MCF 10A (cell line): ENCODE measurements at regions of chr6 and their contacts with region 1.

Region 1: DNA sequence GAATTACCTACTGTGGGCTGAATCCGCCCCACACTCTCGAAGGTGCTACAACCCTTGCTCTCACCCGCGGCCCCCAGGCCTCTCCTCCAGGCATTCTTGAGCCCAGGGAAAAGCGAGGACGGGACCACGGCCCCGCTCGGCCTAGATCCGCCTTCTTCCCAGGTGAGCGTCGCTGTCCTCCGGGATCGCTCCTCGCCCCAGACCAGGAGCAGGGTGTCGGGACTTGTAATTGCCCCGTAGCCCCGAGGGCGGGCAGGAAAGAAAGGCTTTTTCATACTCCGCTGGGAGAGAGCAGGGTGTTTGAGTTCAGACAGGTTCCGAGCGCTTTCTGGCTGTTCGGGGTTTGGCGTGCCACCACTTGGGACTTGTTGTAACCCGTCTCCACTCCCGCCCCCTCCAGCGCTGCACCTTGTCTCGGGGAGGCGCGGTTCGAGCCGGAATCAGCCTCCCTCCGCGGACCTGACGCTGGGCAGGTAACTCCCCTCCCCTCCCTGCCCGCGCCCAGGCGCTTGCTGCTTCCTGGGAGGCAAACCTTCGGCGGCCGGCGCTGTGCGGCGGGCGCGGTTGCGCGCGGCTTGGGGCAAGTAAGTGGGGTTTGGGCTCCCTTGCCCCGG is at the start of gene FAM83B:
- DNase-seq: peak; percentile 94
- H3K4me3 Mint-ChIP-seq: peak within 1 kb of the TSS; percentile 88
- H3K27ac Mint-ChIP-seq: peak within 1 kb of the TSS; percentile 97
- H3K4me1 Mint-ChIP-seq: peaks cover 49% of the 10 kb centered on the region
- H3K27me3 Mint-ChIP-seq: no peaks in the 10 kb centered on the region
- CTCF ChIP-seq: no peak
- total RNA-seq, gene FAM83B: 22.3 and 25.4 TPM in 2 replicates

Region 2: DNA sequence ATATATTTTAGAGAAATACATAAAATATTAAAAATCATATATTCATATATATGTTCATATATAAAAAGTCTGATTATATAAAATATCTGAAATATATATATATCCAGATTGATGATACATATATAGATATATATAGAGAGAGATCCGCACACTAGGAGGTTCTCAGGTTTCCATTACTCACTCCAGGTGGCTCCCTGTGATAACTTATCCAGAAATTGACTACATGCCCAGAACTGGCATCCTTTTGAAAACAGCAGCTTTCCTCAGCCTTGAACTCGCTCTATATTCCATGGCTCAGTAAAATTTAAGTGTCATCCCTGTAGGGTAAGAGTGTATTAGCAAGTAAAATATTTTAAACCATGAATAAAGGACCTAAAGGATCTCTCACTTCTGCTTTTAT is 331.3 kb before region 1 on chr6:
- CTCF ChIA-PET with region 1: no interaction called
- POLR2A ChIA-PET with region 1: no interaction called
- intact Hi-C with region 1: loop called (anchors 10 kb)
- DNase-seq: peak; percentile 45
- H3K4me3 Mint-ChIP-seq: no peak overlapping the region
- H3K27ac Mint-ChIP-seq: no peak overlapping the region
- H3K4me1 Mint-ChIP-seq: peaks cover 9% of the 10 kb centered on the region
- H3K27me3 Mint-ChIP-seq: no peaks in the 10 kb centered on the region
- CTCF ChIP-seq: no peak

Region 3: DNA sequence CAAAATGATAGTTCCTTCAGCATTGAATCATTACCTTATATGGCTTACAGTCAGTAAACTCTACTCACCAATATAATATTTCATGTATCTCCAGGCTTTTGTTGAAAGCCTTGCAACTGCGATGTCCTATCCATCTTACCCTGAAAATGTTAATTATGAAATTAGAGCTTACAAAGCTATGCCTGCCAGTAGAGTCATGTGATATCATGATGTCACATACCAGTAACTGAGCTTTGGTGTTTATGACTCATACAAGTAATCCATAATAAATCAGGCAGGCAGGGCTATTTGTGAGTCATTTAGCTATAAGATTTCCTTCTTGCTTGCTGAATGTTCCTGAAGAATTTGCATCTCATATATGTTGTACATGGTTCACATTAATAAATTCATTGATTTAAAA is 44.7 kb before region 1 on chr6:
- CTCF ChIA-PET with region 1: interaction called, 4 read pairs
- POLR2A ChIA-PET with region 1: interaction called, 13 read pairs
- intact Hi-C with region 1: loop called (anchors 2 kb)
- DNase-seq: peak; percentile 81
- H3K4me3 Mint-ChIP-seq: peak overlapping the region; percentile 45
- H3K27ac Mint-ChIP-seq: no peak overlapping the region
- H3K4me1 Mint-ChIP-seq: peaks cover 8% of the 10 kb centered on the region
- H3K27me3 Mint-ChIP-seq: no peaks in the 10 kb centered on the region
- CTCF ChIP-seq: no peak

Region 4: GRCh38 chr6:54878674-54879073 is 32.3 kb after region 1 on chr6:
- CTCF ChIA-PET with region 1: interaction called, 4 read pairs
- POLR2A ChIA-PET with region 1: interaction called, 35 read pairs
- intact Hi-C with region 1: loop called (anchors 2 kb)
- DNase-seq: peak; percentile 20
- H3K4me3 Mint-ChIP-seq: no peak overlapping the region
- H3K27ac Mint-ChIP-seq: no peak overlapping the region
- H3K4me1 Mint-ChIP-seq: peaks cover 16% of the 10 kb centered on the region
- H3K27me3 Mint-ChIP-seq: no peaks in the 10 kb centered on the region
- CTCF ChIP-seq: peak; percentile 17

Region 5: GRCh38 chr6:54935739-54936138 is 89.4 kb after region 1 on chr6:
- CTCF ChIA-PET with region 1: no interaction called
- POLR2A ChIA-PET with region 1: interaction called, 5 read pairs
- intact Hi-C with region 1: loop called (anchors 5 kb)
- DNase-seq: peak; percentile 96
- H3K4me3 Mint-ChIP-seq: no peak overlapping the region
- H3K27ac Mint-ChIP-seq: no peak overlapping the region
- H3K4me1 Mint-ChIP-seq: no peaks in the 10 kb centered on the region
- H3K27me3 Mint-ChIP-seq: no peaks in the 10 kb centered on the region
- CTCF ChIP-seq: no peak

Region 6: GRCh38 chr6:55014321-55015088 is 168.2 kb after region 1 on chr6:
- CTCF ChIA-PET with region 1: no interaction called
- POLR2A ChIA-PET with region 1: no interaction called
- intact Hi-C with region 1: no loop called
- DNase-seq: peak; percentile 0
- H3K4me3 Mint-ChIP-seq: no peak overlapping the region
- H3K27ac Mint-ChIP-seq: no peak overlapping the region
- H3K4me1 Mint-ChIP-seq: no peaks in the 10 kb centered on the region
- H3K27me3 Mint-ChIP-seq: no peaks in the 10 kb centered on the region
- CTCF ChIP-seq: no peak